ENCODE measurements at regions of chr1 and their contacts with region 1.

Region 1: DNA sequence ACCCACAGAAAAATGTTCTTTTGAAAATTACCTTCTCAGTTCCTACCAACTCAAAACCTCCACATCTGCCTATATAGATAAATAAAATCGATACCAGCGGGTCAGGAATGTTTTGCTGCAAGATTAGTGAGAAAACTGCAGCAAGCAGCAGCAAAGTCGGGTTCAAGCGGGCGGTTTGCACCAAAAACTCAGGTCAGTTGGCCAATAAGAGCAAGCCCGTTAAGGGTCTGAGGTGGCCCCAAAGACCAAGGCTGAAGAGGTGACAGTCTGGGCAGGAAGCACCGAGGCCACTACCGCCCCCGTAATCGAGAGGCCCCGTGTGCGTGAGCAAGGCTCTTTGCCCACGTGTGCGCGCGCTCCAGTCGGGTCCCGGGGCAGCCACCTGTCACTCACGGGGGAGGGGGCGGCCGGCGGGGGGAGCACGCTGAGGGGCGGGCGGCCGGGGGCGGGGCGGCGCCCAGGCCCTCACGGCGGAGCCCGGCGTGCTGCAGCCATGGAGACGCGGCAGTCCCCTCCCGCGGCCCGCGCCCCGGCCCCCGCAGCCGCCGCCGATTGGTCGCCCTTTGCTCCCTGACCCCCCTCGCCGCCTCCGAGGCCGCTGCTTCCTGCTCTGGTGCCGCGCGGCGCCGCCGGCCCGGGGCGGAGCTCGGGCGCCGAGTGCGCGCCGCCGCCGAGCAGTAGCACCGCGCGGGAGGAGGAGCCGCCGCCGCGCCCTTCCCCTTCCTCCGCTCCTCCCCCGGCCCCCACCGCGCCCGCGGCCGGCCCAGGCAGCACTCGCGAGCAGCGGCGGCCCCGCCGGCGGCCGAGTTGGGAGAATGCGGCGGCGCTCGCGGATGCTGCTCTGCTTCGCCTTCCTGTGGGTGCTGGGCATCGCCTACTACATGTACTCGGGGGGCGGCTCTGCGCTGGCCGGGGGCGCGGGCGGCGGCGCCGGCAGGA is at the start of gene GALNT2:
- DNase-seq: peak; percentile 94
- H3K4me3 Mint-ChIP-seq: peak within 1 kb of the TSS; percentile 91
- H3K27ac Mint-ChIP-seq: peak within 1 kb of the TSS; percentile 59
- H3K4me1 Mint-ChIP-seq: peaks cover 32% of the 10 kb centered on the region
- H3K27me3 Mint-ChIP-seq: no peaks in the 10 kb centered on the region
- CTCF ChIP-seq: no peak
- total RNA-seq, gene GALNT2: 104 and 114 TPM in 2 replicates

Region 2: GRCh38 chr1:229714964-229715603 is 351.7 kb before region 1 on chr1:
- CTCF ChIA-PET with region 1: interaction called, 4 read pairs
- POLR2A ChIA-PET with region 1: interaction called, 5 read pairs
- intact Hi-C with region 1: loop called (anchors 1 kb)
- DNase-seq: peak; percentile 83
- H3K4me3 Mint-ChIP-seq: no peak overlapping the region
- H3K27ac Mint-ChIP-seq: peak overlapping the region; percentile 17
- H3K4me1 Mint-ChIP-seq: no peaks in the 10 kb centered on the region
- H3K27me3 Mint-ChIP-seq: no peaks in the 10 kb centered on the region
- CTCF ChIP-seq: peak; percentile 88

Region 3: GRCh38 chr1:229887043-229887822 is 179.5 kb before region 1 on chr1:
- CTCF ChIA-PET with region 1: interaction called, 3 read pairs
- POLR2A ChIA-PET with region 1: interaction called, 21 read pairs
- intact Hi-C with region 1: loop called (anchors 5 kb)
- DNase-seq: peak; percentile 97
- H3K4me3 Mint-ChIP-seq: no peak overlapping the region
- H3K27ac Mint-ChIP-seq: peak overlapping the region; percentile 71
- H3K4me1 Mint-ChIP-seq: peaks cover 30% of the 10 kb centered on the region
- H3K27me3 Mint-ChIP-seq: peaks cover 8% of the 10 kb centered on the region
- CTCF ChIP-seq: no peak

Region 4: DNA sequence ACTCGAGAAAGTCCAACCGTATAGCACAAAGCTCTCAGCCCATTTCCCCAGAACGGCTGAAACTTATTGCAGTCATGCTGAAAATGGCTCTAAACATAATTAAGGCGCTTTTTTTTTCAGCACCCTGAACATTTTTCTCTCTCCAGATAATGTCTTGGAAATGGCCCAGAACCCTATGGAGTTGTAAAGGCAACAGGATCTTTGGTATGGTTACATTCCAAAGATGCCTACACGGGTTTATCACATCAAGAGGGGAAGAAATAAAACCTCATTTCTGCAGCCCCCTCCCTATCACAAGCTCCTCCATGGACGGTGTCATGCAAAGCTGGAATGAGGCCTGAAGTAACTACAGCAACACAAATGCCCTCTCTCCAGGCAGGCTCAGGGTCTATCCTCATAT is 126.1 kb before region 1 on chr1:
- CTCF ChIA-PET with region 1: no interaction called
- POLR2A ChIA-PET with region 1: no interaction called
- intact Hi-C with region 1: no loop called
- DNase-seq: no peak
- H3K4me3 Mint-ChIP-seq: no peak overlapping the region
- H3K27ac Mint-ChIP-seq: no peak overlapping the region
- H3K4me1 Mint-ChIP-seq: peaks cover 7% of the 10 kb centered on the region
- H3K27me3 Mint-ChIP-seq: peaks cover 12% of the 10 kb centered on the region
- CTCF ChIP-seq: no peak

Region 5: GRCh38 chr1:230104395-230105244 is 37.9 kb after region 1 on chr1:
- CTCF ChIA-PET with region 1: interaction called, 10 read pairs
- POLR2A ChIA-PET with region 1: interaction called, 20 read pairs
- intact Hi-C with region 1: loop called (anchors 2 kb)
- DNase-seq: peak; percentile 100
- H3K4me3 Mint-ChIP-seq: peak overlapping the region; percentile 61
- H3K27ac Mint-ChIP-seq: peak overlapping the region; percentile 65
- H3K4me1 Mint-ChIP-seq: peaks cover 67% of the 10 kb centered on the region
- H3K27me3 Mint-ChIP-seq: no peaks in the 10 kb centered on the region
- CTCF ChIP-seq: peak; percentile 4

Region 6: GRCh38 chr1:230167419-230167852 is 100.7 kb after region 1 on chr1:
- CTCF ChIA-PET with region 1: no interaction called
- POLR2A ChIA-PET with region 1: interaction called, 3 read pairs
- intact Hi-C with region 1: loop called (anchors 5 kb)
- DNase-seq: peak; percentile 77
- H3K4me3 Mint-ChIP-seq: no peak overlapping the region
- H3K27ac Mint-ChIP-seq: no peak overlapping the region
- H3K4me1 Mint-ChIP-seq: peaks cover 29% of the 10 kb centered on the region
- H3K27me3 Mint-ChIP-seq: no peaks in the 10 kb centered on the region
- CTCF ChIP-seq: peak; percentile 89

Region 7: DNA sequence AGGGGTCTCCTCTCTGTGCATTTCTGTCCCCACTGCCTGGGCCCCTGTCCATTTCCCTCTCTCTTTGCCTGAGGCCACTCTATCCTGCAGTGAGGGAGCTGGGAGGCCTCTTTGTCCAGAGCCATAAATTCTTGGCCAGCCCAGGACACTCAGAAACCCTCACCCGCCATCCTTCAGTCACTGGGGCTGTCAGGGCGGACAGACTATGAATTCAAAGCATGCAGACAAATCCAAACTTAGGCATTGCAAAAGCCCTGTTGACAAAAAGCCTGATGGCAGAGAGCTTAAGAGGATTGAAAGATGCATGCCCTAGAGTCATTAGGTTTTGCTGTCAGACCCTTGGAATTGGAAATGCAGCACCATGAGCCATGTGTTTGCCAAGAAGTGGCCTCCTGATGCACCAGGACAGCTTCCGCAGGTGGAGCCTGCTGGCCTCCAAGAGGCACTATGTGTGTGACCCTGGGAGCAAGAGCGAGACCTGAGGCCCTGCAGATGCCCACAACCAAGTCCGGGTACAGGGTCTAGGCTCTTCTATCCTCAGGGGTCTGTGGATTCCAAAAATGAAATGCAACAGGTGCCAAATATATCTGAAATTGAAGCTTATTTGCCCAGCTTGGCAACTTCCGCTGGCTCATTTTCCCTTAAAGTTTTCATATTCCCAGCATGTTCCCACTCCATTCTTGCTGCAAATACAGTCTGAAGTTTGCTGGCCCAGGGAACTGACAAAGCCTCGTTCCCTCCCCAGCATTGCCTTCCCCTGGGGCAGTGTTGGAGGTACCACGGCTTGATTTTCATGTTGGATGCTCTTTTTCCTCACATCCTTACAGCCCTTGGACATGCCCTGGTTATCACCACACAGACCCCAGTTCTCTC is 181.5 kb after region 1 on chr1:
- CTCF ChIA-PET with region 1: no interaction called
- POLR2A ChIA-PET with region 1: no interaction called
- intact Hi-C with region 1: loop called (anchors 5 kb)
- DNase-seq: no peak
- H3K4me3 Mint-ChIP-seq: no peak overlapping the region
- H3K27ac Mint-ChIP-seq: peak overlapping the region; percentile 78
- H3K4me1 Mint-ChIP-seq: peaks cover 13% of the 10 kb centered on the region
- H3K27me3 Mint-ChIP-seq: no peaks in the 10 kb centered on the region
- CTCF ChIP-seq: no peak

Measured in MCF 10A (cell line).